ENCODE measurements at regions of chr11 and their contacts with region 1.

Region 1: GRCh38 chr11:43311791-43312607 is at the start of gene API5:
- DNase-seq: peak; percentile 84 to 94 (median 92)
- H3K4me3 ChIP-seq: peak within 1 kb of the TSS; percentile 62 to 100 (median 97)
- H3K27ac ChIP-seq: peak within 1 kb of the TSS in 55 of 59 donors; percentile 36 to 93 (median 76)
- H3K27me3 ChIP-seq: no peaks in the 10 kb centered on the region
- CTCF ChIP-seq: peak; percentile 63 to 93 (median 82)
- total RNA-seq, gene API5: 45.0 to 128 (median 97.3) TPM

Region 2: GRCh38 chr11:43358801-43359421 is 46.9 kb after region 1 on chr11 and contains the start of gene TTC17:
- intact Hi-C with region 1: loop called (anchors 5 kb)
- DNase-seq: peak; percentile 88 to 98 (median 92)
- H3K4me3 ChIP-seq: peak within 1 kb of the TSS; percentile 72 to 100 (median 94)
- H3K27ac ChIP-seq: peak within 1 kb of the TSS in 58 of 59 donors; percentile 29 to 95 (median 86)
- H3K27me3 ChIP-seq: no peaks in the 10 kb centered on the region
- CTCF ChIP-seq: peak in 38 of 56 donors; percentile 4 to 62 (median 32)
- total RNA-seq, gene TTC17: 58.4 to 112 (median 85.1) TPM

Measured in dorsolateral prefrontal cortex (tissue), 120 donors.